AG04450 (cell line): ENCODE measurements at regions of chr3 and their contacts with region 1.

Region 1: GRCh38 chr3:181176601-181177000 is 187.1 kb upstream of the DNAJC19 start:
- DNase-seq: peak; percentile 4
- H3K4me3 ChIP-seq: no peak overlapping the region
- H3K27ac ChIP-seq: no peak overlapping the region
- H3K27me3 ChIP-seq: no peaks in the 10 kb centered on the region
- CTCF ChIP-seq: peak; percentile 48

Region 2: GRCh38 chr3:180802837-180803236 is 373.8 kb before region 1 on chr3:
- CTCF ChIA-PET with region 1: interaction called, 10 read pairs
- POLR2A ChIA-PET with region 1: no interaction called
- DNase-seq: no peak
- H3K4me3 ChIP-seq: no peak overlapping the region
- H3K27ac ChIP-seq: no peak overlapping the region
- H3K27me3 ChIP-seq: no peaks in the 10 kb centered on the region
- CTCF ChIP-seq: peak; percentile 62

Region 3: GRCh38 chr3:180898572-180898971 is 278.0 kb before region 1 on chr3:
- CTCF ChIA-PET with region 1: no interaction called
- POLR2A ChIA-PET with region 1: no interaction called
- DNase-seq: no peak
- H3K4me3 ChIP-seq: no peak overlapping the region
- H3K27ac ChIP-seq: no peak overlapping the region
- H3K27me3 ChIP-seq: no peaks in the 10 kb centered on the region
- CTCF ChIP-seq: no peak